Activated T-helper 2 cell treated with anti-CD3 and anti-CD28 coated beads, Interferon-gamma antibody, Interleukin-2, Interleukin-4, amounts not matched to agents 10 μg/mL and 5 μg/mL and 100 μg/mL, durations not matched to agents 14 hours and 24 hours and 36 hours (primary cell): ENCODE measurements at regions of chr5 and their contacts with region 1.

Region 1: DNA sequence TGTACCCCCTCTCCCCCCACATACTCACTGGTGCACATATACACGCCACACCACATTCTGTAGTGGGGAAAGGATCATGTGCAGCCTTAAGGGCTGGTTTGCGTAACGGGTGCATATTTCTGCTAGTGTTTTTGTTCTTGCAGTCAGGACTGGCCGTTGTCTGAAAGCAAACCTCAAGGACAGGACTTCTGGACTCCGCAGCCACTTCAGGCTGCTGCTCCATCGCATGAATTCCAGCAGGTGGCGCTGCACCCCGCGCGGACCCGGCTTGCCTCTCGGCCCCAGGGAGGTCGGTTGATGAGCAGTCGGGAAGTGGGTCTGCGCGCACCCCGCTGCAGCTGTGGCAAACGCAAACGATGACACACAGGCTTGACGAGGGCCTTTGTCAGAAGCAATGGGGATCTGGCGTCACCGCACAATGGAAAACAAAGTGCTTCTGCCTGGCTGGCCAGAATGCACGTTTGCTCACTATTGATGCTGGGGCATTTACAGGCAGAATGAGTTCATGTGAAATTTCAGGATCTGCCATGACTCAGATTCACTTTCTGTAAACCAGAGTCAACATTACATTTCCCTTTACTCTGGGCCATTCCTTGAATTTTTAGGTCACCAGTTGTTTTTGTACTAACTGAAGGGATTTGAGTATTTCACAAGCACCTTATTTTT is 36.3 kb upstream of the GLRX start:
- DNase-seq: peak; percentile 84
- H3K4me3 Mint-ChIP-seq: peak overlapping the region; percentile 38
- H3K27ac Mint-ChIP-seq: peak overlapping the region; percentile 80
- H3K4me1 Mint-ChIP-seq: peaks cover 52% of the 10 kb centered on the region
- H3K27me3 Mint-ChIP-seq: no peaks in the 10 kb centered on the region

Region 2: DNA sequence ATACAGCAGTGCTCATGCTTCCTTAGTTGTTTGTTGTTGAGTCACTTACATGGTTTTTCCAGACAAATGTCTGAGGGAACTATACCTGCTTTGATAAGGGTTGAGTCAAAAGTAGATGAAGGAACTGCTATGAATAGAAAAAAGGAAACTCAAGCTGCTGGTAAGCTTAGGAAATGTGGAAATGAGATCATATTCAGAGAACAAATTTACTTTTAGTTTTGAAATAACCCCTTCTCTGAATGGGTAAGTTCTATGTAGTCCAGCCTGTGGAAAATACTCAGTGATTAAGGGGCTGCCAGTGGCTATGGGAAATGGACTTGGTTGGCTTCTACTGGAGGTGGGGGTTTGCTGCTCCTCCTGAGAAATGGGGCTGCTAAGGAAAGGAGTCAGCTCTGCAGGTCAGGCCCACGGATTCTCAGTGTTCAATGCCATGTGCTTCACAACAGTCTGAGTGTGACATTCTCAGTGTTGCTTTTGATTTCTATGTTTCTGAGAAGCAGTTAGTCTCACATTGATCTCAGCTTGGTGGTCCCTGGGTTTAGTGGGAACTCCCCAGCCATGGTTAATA is 11.4 kb after region 1 on chr5:
- intact Hi-C with region 1: loop called (anchors 1 kb)
- DNase-seq: peak; percentile 28
- H3K4me3 Mint-ChIP-seq: peak overlapping the region; percentile 37
- H3K27ac Mint-ChIP-seq: peak overlapping the region; percentile 89
- H3K4me1 Mint-ChIP-seq: peaks cover 45% of the 10 kb centered on the region
- H3K27me3 Mint-ChIP-seq: peaks cover 4% of the 10 kb centered on the region

Region 3: DNA sequence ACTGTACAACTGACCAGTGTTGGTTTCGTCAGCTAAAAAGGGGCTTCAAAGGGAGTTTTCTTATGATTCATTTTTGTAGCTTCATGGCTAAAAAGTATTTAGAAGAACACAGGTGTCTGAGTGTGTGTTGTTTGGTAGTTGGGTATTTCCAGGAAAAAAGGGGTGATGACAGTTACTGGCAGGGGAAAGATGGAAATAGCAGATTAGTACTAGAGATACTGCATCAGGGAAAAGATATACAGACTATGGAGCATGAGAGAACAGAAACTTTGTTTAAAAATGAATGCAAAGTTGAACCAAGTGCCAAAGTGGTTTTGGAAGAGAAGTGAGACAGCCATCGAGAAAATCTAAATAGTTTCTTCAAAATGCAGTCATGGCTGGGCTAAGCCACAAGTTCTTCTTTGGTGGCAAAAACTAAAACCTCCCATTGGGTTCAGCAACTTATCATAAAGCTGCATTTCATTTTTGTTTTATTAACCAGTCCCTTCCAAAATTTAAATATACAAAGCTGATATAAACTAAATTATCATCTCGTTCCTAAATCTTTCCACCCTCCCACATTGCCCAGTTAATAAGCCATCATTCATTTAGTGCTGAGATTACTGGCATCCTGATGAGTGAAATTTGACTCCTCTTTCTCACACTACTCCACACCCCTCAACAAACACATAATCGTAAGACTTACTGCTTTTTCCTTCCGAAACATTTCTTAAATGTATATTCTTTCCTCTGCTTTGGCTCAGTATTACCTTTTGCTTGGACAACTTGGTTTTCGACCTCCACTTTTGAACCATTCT is 69.3 kb after region 1 on chr5:
- intact Hi-C with region 1: loop called (anchors 1 kb)
- DNase-seq: no peak
- H3K4me3 Mint-ChIP-seq: peak overlapping the region; percentile 5
- H3K27ac Mint-ChIP-seq: peak overlapping the region; percentile 85
- H3K4me1 Mint-ChIP-seq: peaks cover 64% of the 10 kb centered on the region
- H3K27me3 Mint-ChIP-seq: no peaks in the 10 kb centered on the region

Region 4: DNA sequence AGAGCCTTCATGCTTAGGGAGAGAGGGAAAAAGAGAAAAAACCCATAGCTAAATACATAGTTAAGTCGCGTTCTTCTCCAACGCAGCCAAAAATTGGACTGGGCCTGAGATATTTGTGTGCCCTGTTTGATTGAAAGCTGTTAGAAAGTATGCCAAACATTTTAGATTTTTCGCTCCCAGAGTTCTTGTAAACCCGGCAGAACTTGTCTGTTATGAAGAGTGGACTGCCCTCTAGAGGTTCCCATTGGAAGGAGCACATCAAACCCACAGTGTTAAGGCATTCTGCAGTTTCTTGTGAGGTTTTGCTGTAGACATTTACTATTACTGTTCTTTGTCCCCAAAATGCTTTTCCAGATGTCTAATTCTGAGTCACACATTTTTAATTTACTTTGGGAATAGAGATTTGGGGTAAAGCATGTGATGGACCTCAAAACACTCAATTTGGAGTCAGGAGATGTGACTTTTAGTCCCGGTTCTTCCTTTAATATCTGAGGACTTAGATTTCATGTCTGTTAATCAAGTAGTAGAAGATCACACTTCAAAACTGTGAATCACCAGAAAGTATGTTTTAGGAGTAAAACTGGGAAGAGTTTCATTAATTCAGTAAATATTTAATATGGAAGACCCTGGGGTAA is 477.7 kb after region 1 on chr5:
- intact Hi-C with region 1: loop called (anchors 1 kb)
- DNase-seq: peak; percentile 38
- H3K4me3 Mint-ChIP-seq: no peak overlapping the region
- H3K27ac Mint-ChIP-seq: no peak overlapping the region
- H3K4me1 Mint-ChIP-seq: peaks cover 14% of the 10 kb centered on the region
- H3K27me3 Mint-ChIP-seq: peaks cover 21% of the 10 kb centered on the region

Region 5: GRCh38 chr5:96601811-96602244 is 743.0 kb after region 1 on chr5:
- intact Hi-C with region 1: loop called (anchors 2 kb)
- DNase-seq: peak; percentile 26
- H3K4me3 Mint-ChIP-seq: no peak overlapping the region
- H3K27ac Mint-ChIP-seq: no peak overlapping the region
- H3K4me1 Mint-ChIP-seq: peaks cover 12% of the 10 kb centered on the region
- H3K27me3 Mint-ChIP-seq: peaks cover 32% of the 10 kb centered on the region

Region 6: GRCh38 chr5:96662725-96663513 is 804.1 kb after region 1 on chr5:
- intact Hi-C with region 1: loop called (anchors 5 kb)
- DNase-seq: peak; percentile 82
- H3K4me3 Mint-ChIP-seq: peak overlapping the region; percentile 90
- H3K27ac Mint-ChIP-seq: peak overlapping the region; percentile 96
- H3K4me1 Mint-ChIP-seq: peaks cover 55% of the 10 kb centered on the region
- H3K27me3 Mint-ChIP-seq: peaks cover 26% of the 10 kb centered on the region